ENCODE measurements at regions of chr2 and their contacts with region 1.

Region 1: GRCh38 chr2:42086500-42086953 is 38.7 kb downstream of the PKDCC start:
- DNase-seq: no peak
- ATAC-seq: peak; percentile 60 to 80
- H3K4me3 ChIP-seq: no peak overlapping the region
- H3K27ac ChIP-seq: no peak overlapping the region
- H3K4me1 ChIP-seq: peaks cover 16% of the 10 kb centered on the region
- H3K27me3 ChIP-seq: no peaks in the 10 kb centered on the region
- CTCF ChIP-seq: peak; percentile 76

Region 2: GRCh38 chr2:41853427-41854216 is 232.9 kb before region 1 on chr2:
- intact Hi-C with region 1: loop called (anchors 10 kb)
- DNase-seq: no peak
- ATAC-seq: peak in 1 of 2 donors; percentile 51
- H3K4me3 ChIP-seq: no peak overlapping the region
- H3K27ac ChIP-seq: no peak overlapping the region
- H3K4me1 ChIP-seq: no peaks in the 10 kb centered on the region
- H3K27me3 ChIP-seq: no peaks in the 10 kb centered on the region
- CTCF ChIP-seq: peak; percentile 76

Region 3: DNA sequence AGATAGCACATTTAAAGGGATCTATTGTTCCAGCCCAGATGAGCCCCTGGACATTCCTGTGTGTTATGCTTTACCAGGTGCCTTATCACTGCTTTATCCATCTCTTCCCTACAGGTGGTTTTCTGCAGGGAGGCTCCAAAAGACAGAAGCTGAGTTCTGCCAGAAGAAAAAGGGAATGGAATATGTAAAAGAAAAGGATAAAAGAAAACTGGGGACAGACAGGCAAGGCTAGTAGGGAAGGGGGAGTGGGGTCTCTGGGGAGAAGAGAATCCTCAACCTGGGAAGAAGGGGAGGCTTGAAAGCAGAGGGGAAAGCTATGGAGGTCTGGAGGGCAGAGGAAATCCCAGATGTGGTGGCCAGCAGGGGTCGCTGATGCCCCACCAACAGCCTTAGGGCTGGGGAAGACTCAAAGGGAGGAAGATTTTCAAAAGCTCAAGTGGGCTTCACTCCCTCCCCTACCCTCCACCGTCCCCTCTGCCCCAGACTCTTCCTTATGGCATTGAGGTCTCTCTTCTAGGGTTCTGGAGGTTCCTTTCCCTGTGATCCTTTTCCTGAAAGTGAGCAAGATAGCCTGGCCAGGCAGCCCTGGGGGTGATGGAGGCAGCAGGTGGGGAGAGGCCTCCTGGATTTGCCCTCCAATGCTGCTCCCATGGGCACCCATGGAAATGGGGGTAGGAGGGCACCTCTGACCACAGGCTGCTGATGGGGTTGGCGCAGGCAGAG is 216.8 kb before region 1 on chr2:
- intact Hi-C with region 1: loop called (anchors 5 kb)
- DNase-seq: peak; percentile 73
- ATAC-seq: peak; percentile 82 to 92
- H3K4me3 ChIP-seq: no peak overlapping the region
- H3K27ac ChIP-seq: no peak overlapping the region
- H3K4me1 ChIP-seq: no peaks in the 10 kb centered on the region
- H3K27me3 ChIP-seq: no peaks in the 10 kb centered on the region
- CTCF ChIP-seq: peak; percentile 87

Region 4: DNA sequence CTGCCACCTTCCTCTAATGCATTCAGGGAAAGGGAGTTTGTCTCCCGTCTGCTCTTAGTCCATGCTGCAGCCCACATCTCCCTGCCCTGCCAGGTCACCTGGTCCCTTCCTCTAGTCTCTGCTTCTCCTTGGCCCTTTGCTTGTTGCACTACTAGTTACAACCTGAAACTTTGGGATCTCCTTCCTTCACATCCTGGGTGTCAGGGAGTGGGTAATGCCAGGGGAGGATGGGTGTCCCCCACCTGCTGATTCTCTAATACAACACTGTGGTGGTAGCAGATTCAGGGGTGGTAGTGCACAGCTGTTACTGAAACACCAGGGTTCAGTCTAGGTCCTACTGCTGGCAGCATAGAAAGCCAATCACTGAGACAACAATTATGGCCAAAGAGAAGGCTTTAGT is 305.7 kb after region 1 on chr2:
- intact Hi-C with region 1: no loop called
- DNase-seq: no peak
- ATAC-seq: no peak
- H3K4me3 ChIP-seq: no peak overlapping the region
- H3K27ac ChIP-seq: no peak overlapping the region
- H3K4me1 ChIP-seq: no peaks in the 10 kb centered on the region
- H3K27me3 ChIP-seq: no peaks in the 10 kb centered on the region
- CTCF ChIP-seq: no peak